Activated T-helper 2 cell treated with anti-CD3 and anti-CD28 coated beads, Interferon-gamma antibody, Interleukin-2, Interleukin-4, amounts not matched to agents 10 μg/mL and 5 μg/mL and 100 μg/mL, durations not matched to agents 14 hours and 24 hours and 36 hours (primary cell): ENCODE measurements at regions of chr12 and their contacts with region 1.

Region 1: DNA sequence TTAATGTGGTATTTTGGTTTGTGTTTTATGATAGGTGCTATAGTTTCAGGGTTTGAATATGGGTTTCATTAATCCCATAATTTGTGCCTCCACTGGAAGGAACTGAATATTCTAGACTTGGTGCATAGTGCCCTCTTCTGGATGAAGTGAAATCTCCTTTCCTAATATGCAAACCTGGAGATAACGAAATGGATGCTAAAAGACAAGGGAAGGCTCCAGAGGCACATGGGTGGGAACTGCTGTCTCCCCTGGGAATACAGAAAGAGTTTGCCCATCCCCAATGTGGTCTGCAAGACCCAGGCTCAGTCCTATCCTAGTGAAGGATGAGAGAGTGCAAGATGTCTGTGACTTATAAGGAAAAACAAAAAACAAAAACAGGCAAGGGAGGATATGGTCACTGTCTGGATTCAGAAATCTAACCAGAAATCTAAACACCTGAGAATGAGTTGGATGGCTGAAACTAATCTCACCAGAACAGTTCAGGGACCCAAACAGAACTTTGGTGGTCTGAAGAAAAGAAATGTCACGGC is 142.3 kb upstream of the TMPO start:
- DNase-seq: no peak
- H3K4me3 Mint-ChIP-seq: no peak overlapping the region
- H3K27ac Mint-ChIP-seq: no peak overlapping the region
- H3K4me1 Mint-ChIP-seq: peaks cover 28% of the 10 kb centered on the region
- H3K27me3 Mint-ChIP-seq: peaks cover 35% of the 10 kb centered on the region

Region 2: GRCh38 chr12:96985480-96986362 is 1387.4 kb before region 1 on chr12:
- intact Hi-C with region 1: loop called (anchors 5 kb)
- DNase-seq: peak; percentile 22
- H3K4me3 Mint-ChIP-seq: peak overlapping the region; percentile 17
- H3K27ac Mint-ChIP-seq: no peak overlapping the region
- H3K4me1 Mint-ChIP-seq: peaks cover 5% of the 10 kb centered on the region
- H3K27me3 Mint-ChIP-seq: peaks cover 45% of the 10 kb centered on the region

Region 3: GRCh38 chr12:97148941-97149559 is 1224.0 kb before region 1 on chr12:
- intact Hi-C with region 1: loop called (anchors 2 kb)
- DNase-seq: peak; percentile 29
- H3K4me3 Mint-ChIP-seq: no peak overlapping the region
- H3K27ac Mint-ChIP-seq: no peak overlapping the region
- H3K4me1 Mint-ChIP-seq: peaks cover 3% of the 10 kb centered on the region
- H3K27me3 Mint-ChIP-seq: peaks cover 2% of the 10 kb centered on the region

Region 4: GRCh38 chr12:97886511-97887176 is 486.4 kb before region 1 on chr12:
- intact Hi-C with region 1: no loop called
- DNase-seq: no peak
- H3K4me3 Mint-ChIP-seq: no peak overlapping the region
- H3K27ac Mint-ChIP-seq: no peak overlapping the region
- H3K4me1 Mint-ChIP-seq: no peaks in the 10 kb centered on the region
- H3K27me3 Mint-ChIP-seq: no peaks in the 10 kb centered on the region

Region 5: GRCh38 chr12:98227162-98227561 is 145.9 kb before region 1 on chr12:
- intact Hi-C with region 1: loop called (anchors 5 kb)
- DNase-seq: no peak
- H3K4me3 Mint-ChIP-seq: no peak overlapping the region
- H3K27ac Mint-ChIP-seq: no peak overlapping the region
- H3K4me1 Mint-ChIP-seq: no peaks in the 10 kb centered on the region
- H3K27me3 Mint-ChIP-seq: peaks cover 4% of the 10 kb centered on the region

Region 6: GRCh38 chr12:98385636-98386035 is 12.5 kb after region 1 on chr12:
- intact Hi-C with region 1: loop called (anchors 1 kb)
- DNase-seq: no peak
- H3K4me3 Mint-ChIP-seq: no peak overlapping the region
- H3K27ac Mint-ChIP-seq: no peak overlapping the region
- H3K4me1 Mint-ChIP-seq: no peaks in the 10 kb centered on the region
- H3K27me3 Mint-ChIP-seq: peaks cover 10% of the 10 kb centered on the region

Region 7: DNA sequence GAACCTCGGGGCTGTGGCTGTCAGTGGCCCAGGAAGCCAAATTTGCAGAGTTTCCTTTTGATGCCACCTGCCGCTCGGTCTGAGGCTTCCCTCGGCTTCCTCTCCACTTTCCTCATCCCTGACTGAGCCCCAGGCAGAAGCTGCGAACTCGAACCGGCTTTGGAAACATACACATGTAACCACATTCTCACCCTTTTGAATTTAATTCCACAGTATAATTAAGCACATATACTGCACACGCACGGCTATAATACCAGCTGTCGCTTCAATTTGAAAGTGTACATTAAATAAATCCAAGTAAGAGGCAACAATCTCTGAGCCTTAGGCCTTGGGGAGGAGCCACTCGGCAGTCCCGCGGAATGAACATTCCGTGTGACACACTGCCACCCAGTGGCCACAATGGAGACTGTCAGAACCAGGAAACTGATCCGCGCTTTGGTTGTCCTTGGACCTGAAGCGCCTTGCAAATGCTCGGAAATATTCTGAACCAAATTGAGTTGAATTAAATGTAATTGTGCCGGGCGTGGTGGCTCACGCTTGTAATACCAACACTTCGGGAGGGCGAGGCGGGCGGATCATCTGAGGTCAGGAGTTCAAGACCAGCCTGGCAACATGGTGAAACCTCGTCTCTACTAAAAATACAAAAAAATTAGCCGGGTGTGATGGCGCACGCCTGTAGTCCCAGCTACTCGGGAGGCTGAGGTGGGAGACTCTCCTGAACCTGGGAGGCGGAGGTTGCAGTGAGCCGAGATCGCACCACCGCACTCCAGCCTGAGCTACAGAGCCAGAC is 24.4 kb after region 1 on chr12:
- intact Hi-C with region 1: loop called (anchors 2 kb)
- DNase-seq: peak; percentile 72
- H3K4me3 Mint-ChIP-seq: peak overlapping the region; percentile 76
- H3K27ac Mint-ChIP-seq: peak overlapping the region; percentile 59
- H3K4me1 Mint-ChIP-seq: peaks cover 39% of the 10 kb centered on the region
- H3K27me3 Mint-ChIP-seq: peaks cover 10% of the 10 kb centered on the region